ENCODE measurements at regions of chr1 and their contacts with region 1.

Region 1: GRCh38 chr1:167687919-167688519 is 33.8 kb upstream of the MPZL1 start:
- DNase-seq: no peak
- H3K4me3 ChIP-seq: no peak overlapping the region
- H3K27me3 ChIP-seq: peaks cover 4% of the 10 kb centered on the region
- CTCF ChIP-seq: peak; percentile 90

Region 2: GRCh38 chr1:167474191-167474716 is 213.8 kb before region 1 on chr1:
- CTCF ChIA-PET with region 1: no interaction called
- POLR2A ChIA-PET with region 1: no interaction called
- DNase-seq: no peak
- H3K4me3 ChIP-seq: no peak overlapping the region
- H3K27me3 ChIP-seq: peaks cover 3% of the 10 kb centered on the region; the same call in 1 of the 2 replicates
- CTCF ChIP-seq: no peak

Region 3: GRCh38 chr1:167553136-167554027 is 134.6 kb before region 1 on chr1 and contains the start of gene CREG1:
- CTCF ChIA-PET with region 1: interaction called, 19 read pairs
- POLR2A ChIA-PET with region 1: no interaction called
- DNase-seq: peak; percentile 55
- H3K4me3 ChIP-seq: peak within 1 kb of the TSS; percentile 67
- H3K27me3 ChIP-seq: no peaks in the 10 kb centered on the region
- CTCF ChIP-seq: no peak
- polyA plus RNA-seq, gene CREG1: 27.5 and 54.5 TPM in 2 replicates

Region 4: DNA sequence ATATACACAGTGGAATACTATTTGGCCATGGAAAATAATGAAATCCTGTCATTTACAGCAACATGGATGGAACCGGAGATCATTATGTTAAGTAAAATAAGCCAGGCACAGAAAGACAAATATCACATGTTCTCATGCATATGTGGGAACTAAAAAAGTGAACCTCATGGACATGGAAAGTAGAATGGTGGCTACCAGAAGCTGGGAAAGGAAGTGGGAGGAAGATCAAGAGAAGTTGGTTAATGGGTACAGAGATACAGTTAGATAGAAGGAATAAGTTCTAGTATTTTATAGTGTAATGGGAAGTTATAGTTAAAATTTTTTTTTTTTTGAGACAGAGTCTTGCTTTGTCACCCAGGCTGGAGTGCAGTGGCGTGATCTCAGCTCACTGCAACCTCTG is 99.7 kb before region 1 on chr1:
- CTCF ChIA-PET with region 1: interaction called, 17 read pairs
- POLR2A ChIA-PET with region 1: no interaction called
- DNase-seq: no peak
- H3K4me3 ChIP-seq: no peak overlapping the region
- H3K27me3 ChIP-seq: no peaks in the 10 kb centered on the region
- CTCF ChIP-seq: no peak

Region 5: DNA sequence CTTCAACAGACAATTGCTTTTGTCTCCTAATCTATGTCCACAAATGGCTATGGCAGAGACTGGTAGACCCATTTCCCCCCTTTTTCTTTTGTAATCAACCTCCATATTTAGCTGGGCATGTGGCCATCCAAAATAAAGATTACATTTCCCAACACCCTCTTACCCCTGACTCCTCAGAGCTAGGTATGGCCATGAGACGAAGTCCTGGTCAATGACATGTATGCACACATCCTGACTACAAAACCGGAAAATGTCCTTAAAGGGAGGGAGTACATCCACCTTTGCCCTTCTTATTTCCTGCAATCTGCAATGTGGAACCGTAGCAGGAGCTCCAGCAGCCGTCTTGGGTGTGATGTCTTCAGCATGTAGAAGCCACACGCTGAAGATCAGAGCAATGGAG is 94.2 kb before region 1 on chr1:
- CTCF ChIA-PET with region 1: interaction called, 17 read pairs
- POLR2A ChIA-PET with region 1: no interaction called
- DNase-seq: no peak
- H3K4me3 ChIP-seq: no peak overlapping the region
- H3K27me3 ChIP-seq: no peaks in the 10 kb centered on the region
- CTCF ChIP-seq: no peak

Region 6: DNA sequence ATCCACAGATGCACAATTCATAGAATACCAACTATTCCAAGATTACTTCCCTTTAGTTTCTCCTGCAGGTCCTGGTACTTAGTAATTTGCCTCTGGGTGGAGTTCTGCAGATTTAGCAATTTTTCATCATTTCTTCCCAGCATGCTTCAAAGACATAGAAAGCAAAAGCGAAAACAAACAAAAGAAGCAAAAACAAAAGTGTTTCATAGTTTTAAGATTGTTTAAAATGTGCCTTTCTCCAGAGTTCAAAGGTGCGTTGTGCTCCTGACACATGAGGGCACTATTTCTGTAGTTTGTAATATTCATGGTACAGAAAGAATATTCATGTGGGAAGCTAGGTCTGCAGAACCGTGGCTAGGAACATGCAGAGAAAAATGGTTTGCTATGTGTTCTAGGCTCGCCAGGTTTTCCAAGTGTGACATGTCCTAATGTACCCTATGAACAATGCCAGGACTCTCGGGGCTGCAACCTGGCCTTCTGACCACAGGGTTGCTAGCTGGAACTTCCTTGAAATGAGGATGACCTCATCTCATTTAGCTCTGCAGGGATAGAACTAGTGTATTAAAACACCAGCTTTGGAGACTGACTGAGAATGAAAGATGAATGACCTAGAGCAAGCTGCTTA is 88.0 kb before region 1 on chr1:
- CTCF ChIA-PET with region 1: interaction called, 51 read pairs
- POLR2A ChIA-PET with region 1: no interaction called
- DNase-seq: no peak
- H3K4me3 ChIP-seq: no peak overlapping the region
- H3K27me3 ChIP-seq: no peaks in the 10 kb centered on the region
- CTCF ChIP-seq: peak; percentile 52

Region 7: DNA sequence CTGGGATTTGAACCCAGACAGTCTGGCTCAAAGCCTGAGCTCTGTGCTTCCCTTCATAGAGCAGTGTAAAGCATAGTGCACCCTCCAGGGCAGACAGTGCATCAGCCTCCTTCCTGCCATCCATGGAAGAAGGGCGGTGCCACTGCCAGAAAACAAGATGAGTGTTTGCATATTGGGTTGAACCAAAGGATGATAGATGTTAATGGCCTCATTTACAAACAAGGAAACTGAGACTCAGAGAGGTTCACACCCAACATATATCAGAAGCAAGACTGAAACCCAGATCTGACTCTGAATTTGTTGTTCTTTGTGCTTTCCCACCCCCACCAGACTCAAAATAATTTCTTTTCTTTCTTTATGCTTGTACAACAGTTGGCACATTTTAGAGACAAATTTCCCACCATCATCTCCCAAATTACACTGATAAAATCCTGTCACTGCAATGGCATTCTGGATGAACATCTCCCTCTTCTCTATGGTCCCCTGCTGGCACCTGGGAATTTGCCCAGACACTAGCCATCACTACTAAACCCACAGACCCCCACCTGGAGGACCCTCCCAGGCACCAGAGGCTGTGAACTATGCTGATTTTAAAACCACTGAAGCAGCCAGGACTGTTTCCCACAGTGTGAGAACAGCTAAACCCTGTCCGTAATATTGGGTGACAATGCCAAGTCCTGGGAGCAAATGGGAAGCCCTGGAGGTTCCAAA is 11.7 kb before region 1 on chr1:
- CTCF ChIA-PET with region 1: interaction called, 24 read pairs
- POLR2A ChIA-PET with region 1: no interaction called
- DNase-seq: no peak
- H3K4me3 ChIP-seq: no peak overlapping the region
- H3K27me3 ChIP-seq: no peaks in the 10 kb centered on the region; the same call in 1 of the 2 replicates
- CTCF ChIP-seq: no peak

Region 8: DNA sequence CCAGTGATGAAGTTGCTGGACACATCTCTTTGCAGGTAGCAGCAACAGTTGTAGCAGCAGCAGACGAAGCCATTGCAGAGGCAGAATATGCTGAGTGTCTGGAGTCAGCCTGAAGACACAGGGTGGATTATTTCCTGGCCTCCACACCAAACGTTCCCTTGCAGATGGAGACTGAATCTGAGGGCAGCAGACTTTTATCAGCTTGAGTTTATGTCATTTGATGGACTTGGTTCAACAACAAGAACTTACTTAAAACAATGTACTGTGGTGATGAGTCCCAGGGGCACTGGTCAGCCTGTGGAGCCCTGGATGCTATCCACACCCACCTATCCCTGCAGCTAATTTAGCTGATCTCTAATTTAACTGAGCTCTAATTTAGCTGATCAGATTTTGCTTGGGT is 16.7 kb after region 1 on chr1:
- CTCF ChIA-PET with region 1: interaction called, 12 read pairs
- POLR2A ChIA-PET with region 1: no interaction called
- DNase-seq: no peak
- H3K4me3 ChIP-seq: no peak overlapping the region
- H3K27me3 ChIP-seq: peaks cover 12% of the 10 kb centered on the region
- CTCF ChIP-seq: no peak

Measured in BJ (cell line).